ENCODE measurements at regions of chr3 and their contacts with region 1.

Region 1: GRCh38 chr3:36729204-36730056 is 34.9 kb downstream of the DCLK3 start:
- DNase-seq: no peak
- ATAC-seq: peak; percentile 70

Region 2: DNA sequence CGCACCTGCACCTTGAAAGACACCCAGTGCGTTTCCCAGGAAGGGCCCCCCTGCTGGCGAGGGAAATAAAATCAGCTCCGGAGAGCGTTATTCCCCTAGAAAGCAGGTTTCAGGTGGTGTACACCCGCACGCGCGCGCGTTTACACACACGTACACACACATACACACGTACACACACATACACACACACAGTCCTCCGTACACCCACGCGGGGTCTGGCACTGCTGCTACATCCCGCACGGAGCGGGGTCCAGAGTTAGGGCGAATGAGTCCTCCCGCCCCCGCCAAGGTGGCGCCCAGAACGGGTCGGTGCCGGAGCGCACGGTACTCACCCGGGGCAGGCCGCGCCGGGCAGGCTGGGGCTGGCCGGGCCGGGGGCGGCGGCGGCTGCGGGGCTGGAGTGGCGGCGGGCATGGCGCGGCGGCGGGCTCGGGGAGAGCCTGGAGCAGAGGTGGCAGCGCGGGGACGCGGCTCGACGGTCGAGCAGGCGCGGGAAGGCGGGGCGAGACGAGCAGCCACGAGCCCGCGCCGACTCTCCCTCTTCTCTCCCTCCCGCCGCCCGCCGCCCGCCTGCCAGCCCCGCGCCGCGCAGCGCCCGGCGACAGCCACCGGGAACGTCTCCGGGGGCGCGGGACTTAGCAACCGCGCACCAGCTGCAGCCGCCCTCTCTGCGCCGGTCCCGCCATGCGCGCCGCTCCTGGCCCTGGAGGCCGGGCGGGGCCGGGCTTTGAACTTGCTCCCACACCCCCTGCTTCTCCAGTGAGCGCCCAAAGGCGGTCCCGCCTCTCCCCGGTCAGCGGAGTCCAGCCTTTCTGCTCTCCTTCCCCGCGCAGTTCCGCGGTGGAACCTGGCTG is 34.6 kb after region 1 on chr3 and contains the start of gene DCLK3:
- intact Hi-C with region 1: no loop called
- DNase-seq: no peak
- ATAC-seq: peak; percentile 28
- total RNA-seq, gene DCLK3: 0.41 TPM

Region 3: DNA sequence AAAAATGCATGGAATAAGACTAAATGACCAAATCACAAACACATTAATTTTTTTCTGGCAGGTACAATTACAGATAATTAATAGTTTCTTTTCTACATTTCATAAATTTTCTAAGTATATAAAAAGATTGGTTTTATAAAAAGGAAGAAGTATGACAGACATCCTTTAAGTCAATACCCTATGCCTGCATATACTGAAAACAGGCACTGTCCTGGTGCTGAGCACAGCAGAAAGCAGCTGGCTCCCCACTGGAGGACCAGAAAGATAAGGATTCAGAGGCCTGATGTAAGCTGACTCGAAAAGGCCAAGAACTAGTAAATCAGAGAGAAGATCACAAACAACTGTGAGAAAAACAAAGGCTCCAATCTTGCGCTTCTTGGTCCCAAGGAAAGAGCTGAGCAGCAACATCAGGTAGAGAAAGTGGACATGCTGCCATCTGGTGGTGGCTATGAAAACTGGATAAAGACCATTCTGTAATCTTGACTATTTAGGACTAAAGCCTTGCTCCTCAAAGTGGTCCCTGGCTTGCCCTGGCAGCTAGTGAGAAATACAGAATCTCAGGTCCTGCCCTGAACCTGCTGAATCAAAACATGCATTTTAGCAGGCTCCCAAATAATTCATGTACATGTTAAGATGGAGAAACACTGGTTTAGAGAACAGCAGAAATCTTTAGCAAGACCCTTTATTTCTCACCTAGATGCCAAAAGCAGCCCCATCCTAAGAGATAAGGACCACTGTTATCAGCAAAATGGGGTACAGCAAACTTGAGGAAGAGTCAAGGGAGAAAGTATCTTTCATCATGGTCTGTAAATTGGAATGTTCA is 139.4 kb after region 1 on chr3:
- intact Hi-C with region 1: loop called (anchors 1 kb)
- DNase-seq: no peak
- ATAC-seq: peak; percentile 34

Region 4: GRCh38 chr3:36957862-36958686 is 228.6 kb after region 1 on chr3:
- intact Hi-C with region 1: loop called (anchors 2 kb)
- DNase-seq: no peak
- ATAC-seq: no peak